ENCODE measurements at regions of chr2 and their contacts with region 1.

Region 1: GRCh38 chr2:233443468-233444183 is 89.3 kb downstream of the DGKD start:
- DNase-seq: peak; percentile 90
- H3K4me3 Mint-ChIP-seq: no peak overlapping the region
- H3K27ac Mint-ChIP-seq: peak overlapping the region; percentile 42
- H3K4me1 Mint-ChIP-seq: peaks cover 30% of the 10 kb centered on the region
- H3K27me3 Mint-ChIP-seq: no peaks in the 10 kb centered on the region

Region 2: GRCh38 chr2:233395687-233396086 is 47.9 kb before region 1 on chr2:
- CTCF ChIA-PET with region 1: interaction called, 14 read pairs
- POLR2A ChIA-PET with region 1: no interaction called
- DNase-seq: no peak
- H3K4me3 Mint-ChIP-seq: no peak overlapping the region
- H3K27ac Mint-ChIP-seq: no peak overlapping the region
- H3K4me1 Mint-ChIP-seq: peaks cover 46% of the 10 kb centered on the region
- H3K27me3 Mint-ChIP-seq: no peaks in the 10 kb centered on the region

Region 3: GRCh38 chr2:233404222-233404621 is 39.4 kb before region 1 on chr2:
- CTCF ChIA-PET with region 1: interaction called, 62 read pairs
- POLR2A ChIA-PET with region 1: interaction called, 6 read pairs
- DNase-seq: peak; percentile 83
- H3K4me3 Mint-ChIP-seq: no peak overlapping the region
- H3K27ac Mint-ChIP-seq: peak overlapping the region; percentile 79
- H3K4me1 Mint-ChIP-seq: peaks cover 63% of the 10 kb centered on the region
- H3K27me3 Mint-ChIP-seq: no peaks in the 10 kb centered on the region

Region 4: DNA sequence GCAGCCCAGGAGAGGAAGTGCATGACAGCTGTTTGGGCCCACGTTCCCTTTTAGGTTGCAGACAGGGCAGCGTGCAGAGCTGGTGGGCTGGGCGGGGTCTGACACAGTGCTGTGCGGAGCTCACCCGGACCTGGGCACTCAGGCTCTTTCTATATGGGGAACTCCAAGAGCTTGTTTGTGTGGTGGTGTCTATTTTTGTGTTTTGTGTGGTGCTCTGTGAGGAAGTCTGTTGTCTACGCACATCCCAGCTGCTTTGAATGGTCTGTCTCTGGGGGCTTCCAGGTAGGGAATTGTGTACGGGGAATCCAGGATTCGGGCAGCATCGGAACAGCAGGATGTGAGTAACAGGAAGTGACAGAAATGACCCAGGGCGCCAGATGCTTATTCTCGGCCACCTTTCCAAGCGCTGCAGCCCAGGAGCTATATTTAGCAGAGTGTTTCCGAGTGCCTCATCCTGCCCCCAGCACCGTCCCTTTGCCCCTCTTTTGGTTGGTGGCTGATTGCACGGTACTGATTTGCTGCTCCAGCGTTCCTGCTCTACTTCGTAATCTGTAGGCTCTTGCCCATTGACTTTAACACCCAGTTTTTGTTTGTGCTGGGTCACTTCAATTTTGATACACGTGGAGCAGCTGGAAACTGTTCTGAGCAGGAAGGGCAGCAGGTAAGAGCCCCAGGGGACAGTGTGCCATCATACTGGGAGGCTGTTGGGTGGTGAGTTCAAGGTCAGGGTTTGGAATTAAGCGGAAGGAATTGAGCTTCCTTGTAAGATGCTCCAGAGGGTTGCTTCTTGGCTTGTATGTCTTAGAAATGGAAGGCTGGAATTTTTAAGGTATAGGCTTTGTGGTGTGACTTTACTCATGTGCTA is 24.6 kb before region 1 on chr2:
- CTCF ChIA-PET with region 1: interaction called, 27 read pairs
- POLR2A ChIA-PET with region 1: no interaction called
- DNase-seq: peak; percentile 58
- H3K4me3 Mint-ChIP-seq: peak overlapping the region; percentile 76
- H3K27ac Mint-ChIP-seq: peak overlapping the region; percentile 93
- H3K4me1 Mint-ChIP-seq: peaks cover 98% of the 10 kb centered on the region
- H3K27me3 Mint-ChIP-seq: no peaks in the 10 kb centered on the region

Measured in activated CD4-positive, alpha-beta T cell treated with anti-CD3 and anti-CD28 coated beads, Interleukin-2, amount 10 ng/mL, durations not matched to agents 7 days and 5 days (primary cell).